Breast epithelium (tissue), 4 donors: ENCODE measurements at regions of chr1 and their contacts with region 1.

Region 1: GRCh38 chr1:44294588-44295007 is 60.5 kb downstream of the ERI3 start:
- DNase-seq: no peak
- H3K4me3 ChIP-seq: no peak overlapping the region
- H3K27ac ChIP-seq: no peak overlapping the region
- H3K4me1 ChIP-seq: no peaks in the 10 kb centered on the region
- H3K27me3 ChIP-seq: no peaks in the 10 kb centered on the region
- CTCF ChIP-seq: peak in 1 of 3 donors; percentile 34
- POLR2A ChIP-seq: no peak

Region 2: GRCh38 chr1:43893006-43893405 is 401.6 kb before region 1 on chr1:
- intact Hi-C with region 1: loop called (anchors 5 kb)
- DNase-seq: no peak
- H3K4me3 ChIP-seq: no peak overlapping the region
- H3K27ac ChIP-seq: no peak overlapping the region
- H3K4me1 ChIP-seq: no peaks in the 10 kb centered on the region
- H3K27me3 ChIP-seq: no peaks in the 10 kb centered on the region
- CTCF ChIP-seq: no peak
- POLR2A ChIP-seq: no peak

Region 3: GRCh38 chr1:43946236-43947060 is 348.1 kb before region 1 on chr1 and contains the start of gene IPO13:
- intact Hi-C with region 1: no loop called
- DNase-seq: peak; percentile 91 to 93
- H3K4me3 ChIP-seq: peak within 1 kb of the TSS; percentile 61 to 95 (median 83)
- H3K27ac ChIP-seq: peak within 1 kb of the TSS; percentile 98 to 99
- H3K4me1 ChIP-seq: peaks cover 12% of the 10 kb centered on the region in 2 donors
- H3K27me3 ChIP-seq: no peaks in the 10 kb centered on the region
- CTCF ChIP-seq: peak; percentile 72 to 75 (median 72)
- POLR2A ChIP-seq: no peak
- total RNA-seq, gene IPO13: 18.4 to 23.0 (median 20.5) TPM

Region 4: GRCh38 chr1:44249543-44249942 is 45.1 kb before region 1 on chr1:
- intact Hi-C with region 1: no loop called
- DNase-seq: no peak
- H3K4me3 ChIP-seq: no peak overlapping the region
- H3K27ac ChIP-seq: no peak overlapping the region
- H3K4me1 ChIP-seq: no peaks in the 10 kb centered on the region
- H3K27me3 ChIP-seq: no peaks in the 10 kb centered on the region
- CTCF ChIP-seq: no peak
- POLR2A ChIP-seq: no peak

Region 5: GRCh38 chr1:44283524-44284173 is 10.9 kb before region 1 on chr1:
- intact Hi-C with region 1: loop called (anchors 1 kb)
- DNase-seq: no peak
- H3K4me3 ChIP-seq: no peak overlapping the region
- H3K27ac ChIP-seq: no peak overlapping the region
- H3K4me1 ChIP-seq: no peaks in the 10 kb centered on the region
- H3K27me3 ChIP-seq: no peaks in the 10 kb centered on the region
- CTCF ChIP-seq: no peak
- POLR2A ChIP-seq: no peak

Region 6: DNA sequence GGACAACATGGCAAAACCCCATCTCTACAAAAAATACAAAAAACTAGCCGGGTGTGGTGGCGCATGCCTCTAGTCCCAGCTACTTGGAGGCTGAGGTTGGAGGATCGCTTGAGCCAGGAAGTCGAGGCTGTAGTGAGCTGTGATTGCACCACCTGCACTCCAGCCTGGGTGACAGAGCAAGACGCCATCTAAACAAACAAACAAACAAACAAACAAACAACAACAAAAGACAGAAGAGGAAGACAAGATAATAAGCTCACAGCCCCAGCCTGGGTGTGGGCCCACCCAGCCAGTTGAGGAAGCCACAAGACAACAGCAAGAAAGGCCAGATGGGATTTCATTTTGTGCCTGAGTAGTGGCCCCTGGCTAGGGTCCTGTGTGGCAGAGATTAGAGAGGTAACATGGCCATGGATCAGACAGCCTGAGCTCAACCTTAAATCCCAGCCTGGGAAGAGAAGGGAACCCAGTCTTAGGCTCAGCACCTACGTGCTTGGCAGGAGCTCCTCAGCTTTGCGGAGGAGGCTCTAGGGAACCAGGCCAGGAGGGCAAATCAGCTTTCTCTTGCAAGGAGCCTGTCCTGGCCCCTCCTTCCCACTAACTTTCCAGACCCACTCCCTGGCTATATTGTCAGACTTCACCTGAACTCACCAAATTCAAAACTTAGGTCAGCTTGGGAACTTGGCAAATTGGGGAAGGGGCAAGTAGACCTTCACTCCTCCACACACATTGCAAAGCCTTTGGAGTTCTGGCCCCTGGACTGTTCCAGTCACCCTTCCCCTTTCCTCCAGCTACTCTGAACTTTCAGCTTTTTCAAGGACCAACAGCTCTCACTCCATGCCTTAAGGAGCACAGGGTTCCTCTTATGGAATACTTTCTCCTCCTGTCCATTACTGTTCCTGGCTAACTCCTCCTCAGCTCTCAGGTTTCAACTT is 498.5 kb after region 1 on chr1:
- intact Hi-C with region 1: no loop called
- DNase-seq: no peak
- H3K4me3 ChIP-seq: no peak overlapping the region
- H3K27ac ChIP-seq: peak overlapping the region; percentile 13 to 44
- H3K4me1 ChIP-seq: no peaks in the 10 kb centered on the region
- H3K27me3 ChIP-seq: no peaks in the 10 kb centered on the region
- CTCF ChIP-seq: no peak
- POLR2A ChIP-seq: no peak